ENCODE measurements at regions of chr1 and their contacts with region 1.

Region 1: DNA sequence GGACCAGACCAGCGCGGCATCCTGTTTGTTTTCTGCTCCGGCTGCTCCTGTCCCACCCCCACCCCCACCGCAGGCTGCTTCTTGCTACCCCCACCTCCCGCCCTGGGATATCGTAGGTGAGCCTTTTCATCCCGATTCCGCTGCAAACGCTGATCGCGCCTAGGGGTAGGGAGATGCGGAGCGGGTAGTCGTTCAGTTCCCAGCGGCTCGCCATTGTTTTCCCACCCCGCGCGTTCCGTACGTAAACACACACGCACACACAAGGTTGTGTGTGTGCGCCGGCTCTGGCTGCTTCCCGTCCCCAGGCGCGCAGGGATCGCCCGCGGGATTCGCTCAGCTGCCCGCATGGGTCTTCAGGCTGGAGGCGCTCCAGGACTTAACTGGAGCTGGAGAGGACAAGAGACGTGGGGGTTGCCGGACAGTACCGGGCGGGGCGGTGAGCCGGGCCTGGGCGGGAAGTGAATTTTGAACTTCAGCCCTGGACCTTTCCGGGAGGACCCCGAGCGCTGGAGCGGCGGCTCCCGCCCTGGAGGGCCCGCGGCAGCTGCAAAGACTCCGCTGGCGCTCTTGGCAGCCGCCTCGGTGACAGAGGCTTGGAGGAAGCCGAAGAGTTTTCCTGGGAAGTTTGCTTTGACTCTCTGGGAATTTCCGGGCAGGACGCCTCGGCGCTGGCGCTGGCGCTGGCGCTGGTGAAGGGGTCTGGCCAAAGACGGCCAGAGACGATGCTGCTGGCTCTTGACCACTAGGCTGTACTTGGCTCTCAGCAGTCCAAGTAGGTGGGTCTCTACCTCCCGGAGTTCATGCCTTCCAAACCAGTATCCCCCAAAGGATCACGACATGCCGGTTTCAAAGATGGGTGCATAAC is 1.6 kb downstream of the SOX13 start:
- DNase-seq: peak; percentile 13
- ATAC-seq: no peak
- H3K4me3 Mint-ChIP-seq: peak overlapping the region; percentile 66
- H3K27ac Mint-ChIP-seq: no peak overlapping the region
- H3K4me1 Mint-ChIP-seq: peaks cover 18% of the 10 kb centered on the region
- H3K27me3 Mint-ChIP-seq: peaks cover 63% of the 10 kb centered on the region

Region 2: GRCh38 chr1:203480525-203481084 is 593.9 kb before region 1 on chr1:
- CTCF ChIA-PET with region 1: no interaction called
- POLR2A ChIA-PET with region 1: no interaction called
- intact Hi-C with region 1: no loop called
- DNase-seq: peak; percentile 67
- ATAC-seq: peak; percentile 64
- H3K4me3 Mint-ChIP-seq: no peak overlapping the region
- H3K27ac Mint-ChIP-seq: no peak overlapping the region
- H3K4me1 Mint-ChIP-seq: peaks cover 3% of the 10 kb centered on the region
- H3K27me3 Mint-ChIP-seq: peaks cover 6% of the 10 kb centered on the region

Region 3: DNA sequence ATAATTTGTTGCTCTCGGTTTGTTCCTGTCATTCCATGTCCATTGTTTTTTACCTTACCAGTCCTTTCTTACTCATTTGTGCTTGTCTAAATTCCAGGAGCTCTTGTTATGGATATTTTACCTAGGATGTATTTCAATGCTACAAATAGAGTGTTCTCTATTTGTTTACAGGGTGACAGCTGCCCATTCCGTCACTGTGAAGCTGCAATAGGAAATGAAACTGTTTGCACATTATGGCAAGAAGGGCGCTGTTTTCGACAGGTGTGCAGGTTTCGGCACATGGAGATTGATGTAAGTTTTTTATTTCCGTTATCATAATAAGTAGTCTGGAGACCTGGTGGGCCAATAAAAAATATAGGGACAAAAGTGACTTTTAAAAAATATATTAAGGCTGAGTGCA is 256.1 kb before region 1 on chr1:
- CTCF ChIA-PET with region 1: no interaction called
- POLR2A ChIA-PET with region 1: no interaction called
- intact Hi-C with region 1: no loop called
- DNase-seq: no peak
- ATAC-seq: no peak
- H3K4me3 Mint-ChIP-seq: no peak overlapping the region
- H3K27ac Mint-ChIP-seq: no peak overlapping the region
- H3K4me1 Mint-ChIP-seq: peaks cover 16% of the 10 kb centered on the region
- H3K27me3 Mint-ChIP-seq: no peaks in the 10 kb centered on the region

Region 4: GRCh38 chr1:204018463-204018862 is 56.0 kb before region 1 on chr1:
- CTCF ChIA-PET with region 1: no interaction called
- POLR2A ChIA-PET with region 1: no interaction called
- intact Hi-C with region 1: loop called in 1 of 2 experiments (anchors 2 kb)
- DNase-seq: no peak
- ATAC-seq: no peak
- H3K4me3 Mint-ChIP-seq: no peak overlapping the region
- H3K27ac Mint-ChIP-seq: no peak overlapping the region
- H3K4me1 Mint-ChIP-seq: no peaks in the 10 kb centered on the region
- H3K27me3 Mint-ChIP-seq: peaks cover 3% of the 10 kb centered on the region